ENCODE measurements at regions of chr2 and their contacts with region 1.

Region 1: GRCh38 chr2:216034065-216034464 is 20.7 kb upstream of the MREG start:
- DNase-seq: peak; percentile 69 to 80
- ATAC-seq: peak; percentile 57 to 91; a peak in 5 of 6 replicates
- H3K4me3 ChIP-seq: no peak overlapping the region
- H3K27ac ChIP-seq: no peak overlapping the region
- H3K4me1 ChIP-seq: no peaks in the 10 kb centered on the region
- CTCF ChIP-seq: peak; percentile 79
- EP300 ChIP-seq: no peak
- POLR2A ChIP-seq: no peak
- RAD21 ChIP-seq: peak; percentile 53

Region 2: DNA sequence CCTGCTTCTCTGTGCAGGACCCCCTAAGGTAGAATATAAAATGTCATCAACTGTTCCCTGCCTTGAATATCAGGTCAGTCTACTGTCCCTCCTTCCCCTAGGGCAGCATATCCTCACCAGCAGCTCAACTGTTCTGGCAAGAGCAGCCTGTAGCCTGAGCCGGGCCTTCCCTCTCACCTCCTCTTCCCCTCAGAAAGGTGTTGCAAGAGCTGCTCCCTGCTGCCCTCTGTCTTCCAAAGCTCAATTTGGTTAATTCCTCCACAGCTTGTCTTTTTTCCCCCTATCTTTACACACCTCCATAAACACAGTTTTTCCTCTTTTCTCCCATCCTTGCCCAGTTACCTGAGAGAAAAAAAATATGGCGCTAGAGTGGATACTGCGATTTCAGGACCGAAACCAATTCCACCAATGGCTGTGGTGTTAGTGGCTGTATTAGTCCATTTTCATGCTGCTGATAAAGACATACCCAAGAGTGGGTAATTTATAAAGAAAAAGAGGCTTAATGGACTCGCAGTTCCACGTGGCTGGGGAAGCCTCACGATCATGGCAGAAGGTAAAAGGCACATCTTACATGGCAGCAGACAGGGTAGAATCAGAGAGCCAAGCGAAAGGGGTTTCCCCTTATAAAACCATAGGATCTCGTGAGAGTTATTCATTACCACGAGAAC is 205.4 kb before region 1 on chr2:
- CTCF ChIA-PET with region 1: no interaction called
- POLR2A ChIA-PET with region 1: no interaction called
- DNase-seq: peak; percentile 46 to 83
- ATAC-seq: peak; percentile 73 to 81
- H3K4me3 ChIP-seq: no peak overlapping the region
- H3K27ac ChIP-seq: peak overlapping the region; percentile 79 to 86
- H3K4me1 ChIP-seq: peaks cover 61% of the 10 kb centered on the region
- CTCF ChIP-seq: peak; percentile 54
- EP300 ChIP-seq: no peak
- POLR2A ChIP-seq: no peak
- RAD21 ChIP-seq: peak; percentile 65 to 70

Region 3: DNA sequence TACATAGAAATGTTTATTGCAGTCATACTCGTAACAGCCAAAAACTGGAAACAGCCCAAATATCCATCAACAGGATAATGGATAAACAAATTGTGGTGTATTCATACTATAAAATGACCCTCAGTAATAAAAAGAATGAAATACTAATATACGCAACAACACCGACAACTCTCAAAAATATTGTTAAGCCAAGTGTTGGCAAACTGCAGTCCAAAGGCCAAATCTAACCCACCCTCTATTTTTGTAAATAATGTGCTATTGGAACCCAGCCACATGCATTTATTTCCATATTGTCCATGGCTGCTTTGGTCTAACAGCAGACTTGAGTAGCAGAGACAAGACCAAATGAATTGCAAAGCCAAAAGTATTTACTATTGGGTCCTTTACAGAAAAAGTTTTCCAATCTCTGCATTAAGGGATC is 171.7 kb before region 1 on chr2:
- CTCF ChIA-PET with region 1: no interaction called
- POLR2A ChIA-PET with region 1: no interaction called
- DNase-seq: no peak
- ATAC-seq: no peak
- H3K4me3 ChIP-seq: no peak overlapping the region
- H3K27ac ChIP-seq: no peak overlapping the region
- H3K4me1 ChIP-seq: no peaks in the 10 kb centered on the region
- CTCF ChIP-seq: no peak
- EP300 ChIP-seq: no peak
- POLR2A ChIP-seq: no peak
- RAD21 ChIP-seq: no peak

Region 4: GRCh38 chr2:216013080-216013909 is 20.8 kb before region 1 on chr2 and contains the start of gene MREG:
- CTCF ChIA-PET with region 1: interaction called, 14 read pairs
- POLR2A ChIA-PET with region 1: no interaction called
- DNase-seq: peak; percentile 76 to 91
- ATAC-seq: peak; percentile 88
- H3K4me3 ChIP-seq: peak within 1 kb of the TSS; percentile 70
- H3K27ac ChIP-seq: peak within 1 kb of the TSS; percentile 75 to 91
- H3K4me1 ChIP-seq: peaks cover 22% of the 10 kb centered on the region
- CTCF ChIP-seq: peak; percentile 73
- EP300 ChIP-seq: no peak
- POLR2A ChIP-seq: no peak
- RAD21 ChIP-seq: peak; percentile 28 to 37; a peak in 3 of 5 replicates
- polyA plus RNA-seq, gene MREG: 7.9 and 8.0 TPM in 2 replicates

Region 5: DNA sequence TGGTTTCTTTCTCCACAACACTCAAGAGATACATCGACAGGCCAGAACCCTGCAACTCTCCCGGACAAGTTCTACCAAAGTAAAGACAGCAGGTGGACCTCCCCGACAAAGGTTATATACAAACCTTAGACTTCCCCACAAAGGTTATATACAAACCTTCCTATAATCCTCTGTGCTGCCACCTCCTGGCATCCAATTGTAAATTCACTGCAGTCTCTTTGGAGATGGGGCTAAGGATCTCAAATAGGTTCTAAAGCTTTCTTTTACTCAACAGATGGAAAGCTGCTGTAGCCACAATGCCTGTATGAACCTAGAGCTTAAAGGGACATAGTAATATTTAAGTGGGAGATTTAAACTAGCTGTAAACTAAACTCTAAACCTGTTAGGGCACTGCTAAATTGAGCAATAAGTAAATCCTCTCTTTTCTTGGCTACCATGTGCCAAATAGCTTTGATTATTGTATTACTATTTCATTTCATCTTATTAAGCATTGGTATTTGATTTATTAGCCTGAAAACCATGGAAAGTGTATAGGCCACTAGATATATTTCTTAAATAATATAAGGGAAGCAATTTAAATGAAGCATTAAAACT is 10.9 kb before region 1 on chr2:
- CTCF ChIA-PET with region 1: interaction called, 31 read pairs
- POLR2A ChIA-PET with region 1: no interaction called
- DNase-seq: peak; percentile 58 to 74
- ATAC-seq: peak; percentile 89 to 97
- H3K4me3 ChIP-seq: no peak overlapping the region
- H3K27ac ChIP-seq: no peak overlapping the region
- H3K4me1 ChIP-seq: no peaks in the 10 kb centered on the region
- CTCF ChIP-seq: peak; percentile 61
- EP300 ChIP-seq: no peak
- POLR2A ChIP-seq: no peak
- RAD21 ChIP-seq: peak; percentile 52 to 54; a peak in 4 of 5 replicates

Region 6: DNA sequence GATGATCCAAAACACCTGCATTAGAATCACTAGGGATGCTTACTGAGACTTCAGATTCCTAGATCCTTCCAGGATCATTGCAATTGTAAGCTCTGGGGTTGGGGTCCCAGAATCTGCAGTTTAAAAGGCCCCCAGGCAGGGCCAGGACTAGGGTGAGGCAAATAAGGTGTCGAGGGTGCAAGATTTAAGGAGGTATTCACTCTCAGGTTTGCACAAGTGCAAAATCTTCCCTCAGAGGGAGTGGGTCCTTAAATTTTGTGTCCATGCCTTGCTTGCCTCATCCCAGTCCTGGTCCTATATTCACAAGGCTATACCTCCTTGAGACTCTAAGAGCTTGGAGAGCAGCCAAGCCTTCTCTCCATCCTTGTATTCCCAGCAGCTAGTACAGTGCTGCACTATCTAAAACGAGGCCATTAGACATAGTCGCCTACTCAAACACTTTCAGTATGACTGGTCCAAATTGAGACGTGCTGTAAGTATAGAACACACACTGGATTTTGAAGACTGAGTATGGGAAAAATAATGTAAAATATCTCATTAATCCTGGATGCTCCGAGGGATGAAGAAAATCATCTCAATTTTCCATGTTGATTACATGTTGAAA is 10.9 kb after region 1 on chr2:
- CTCF ChIA-PET with region 1: interaction called, 20 read pairs
- POLR2A ChIA-PET with region 1: no interaction called
- DNase-seq: no peak
- ATAC-seq: no peak
- H3K4me3 ChIP-seq: no peak overlapping the region
- H3K27ac ChIP-seq: no peak overlapping the region
- H3K4me1 ChIP-seq: no peaks in the 10 kb centered on the region
- CTCF ChIP-seq: no peak
- EP300 ChIP-seq: no peak
- POLR2A ChIP-seq: no peak
- RAD21 ChIP-seq: no peak

Region 7: GRCh38 chr2:216130346-216130971 is 96.4 kb after region 1 on chr2:
- CTCF ChIA-PET with region 1: no interaction called
- POLR2A ChIA-PET with region 1: no interaction called
- DNase-seq: no peak
- ATAC-seq: 0 out of 6 replicates have a peak, but pooled peaks of 1 of the 2 experiments have one; percentile 42
- H3K4me3 ChIP-seq: no peak overlapping the region
- H3K27ac ChIP-seq: no peak overlapping the region
- H3K4me1 ChIP-seq: no peaks in the 10 kb centered on the region
- CTCF ChIP-seq: no peak
- EP300 ChIP-seq: no peak
- POLR2A ChIP-seq: no peak
- RAD21 ChIP-seq: no peak

Region 8: GRCh38 chr2:216260629-216261028 is 226.6 kb after region 1 on chr2:
- CTCF ChIA-PET with region 1: no interaction called
- POLR2A ChIA-PET with region 1: no interaction called
- DNase-seq: no peak
- ATAC-seq: no peak
- H3K4me3 ChIP-seq: no peak overlapping the region
- H3K27ac ChIP-seq: no peak overlapping the region
- H3K4me1 ChIP-seq: no peaks in the 10 kb centered on the region
- CTCF ChIP-seq: no peak
- EP300 ChIP-seq: no peak
- POLR2A ChIP-seq: no peak
- RAD21 ChIP-seq: no peak

Measured in A549 (cell line).